Aorta (tissue), 5 donors: ENCODE measurements at regions of chr17 and their contacts with region 1.

Region 1: GRCh38 chr17:59619293-59620063 is at the start of gene CLTC:
- DNase-seq: peak; percentile 96 to 97
- ATAC-seq: peak; percentile 98
- H3K4me3 ChIP-seq: peak within 1 kb of the TSS; percentile 96 to 100
- H3K27ac ChIP-seq: peak within 1 kb of the TSS; percentile 96 to 97
- H3K4me1 ChIP-seq: no peaks in the 10 kb centered on the region
- H3K27me3 ChIP-seq: no peaks in the 10 kb centered on the region
- total RNA-seq, gene CLTC: 243 to 289 TPM

Region 2: DNA sequence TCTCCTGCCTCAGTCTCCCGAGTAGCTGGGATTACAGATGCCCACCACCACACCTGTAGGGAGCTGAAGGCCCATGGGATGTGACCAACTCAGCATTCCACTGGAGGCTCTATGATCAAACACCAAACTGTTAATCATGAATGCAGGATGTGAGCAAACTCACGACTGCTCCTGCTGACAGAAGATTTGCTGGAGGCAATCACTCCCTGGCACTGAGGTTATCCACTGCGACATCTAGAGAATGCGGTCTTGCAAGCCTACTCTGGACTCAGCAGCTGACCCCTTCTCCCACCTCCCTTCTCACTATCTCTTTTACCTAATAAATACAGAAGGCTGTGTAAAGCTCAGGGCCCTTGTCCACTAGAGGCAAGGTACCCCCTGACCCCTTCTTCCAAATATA is 932.5 kb before region 1 on chr17:
- intact Hi-C with region 1: no loop called
- DNase-seq: no peak
- ATAC-seq: no peak
- H3K4me3 ChIP-seq: no peak overlapping the region
- H3K27ac ChIP-seq: no peak overlapping the region
- H3K4me1 ChIP-seq: no peaks in the 10 kb centered on the region
- H3K27me3 ChIP-seq: no peaks in the 10 kb centered on the region

Region 3: GRCh38 chr17:59565171-59565969 is 54.1 kb before region 1 on chr17 and contains the start of gene DHX40:
- intact Hi-C with region 1: loop called in 1 of 2 experiments (anchors 5 kb)
- DNase-seq: peak; percentile 97 to 98
- ATAC-seq: peak; percentile 98
- H3K4me3 ChIP-seq: peak within 1 kb of the TSS; percentile 68 to 92
- H3K27ac ChIP-seq: peak within 1 kb of the TSS in 1 of 2 donors; percentile 85
- H3K4me1 ChIP-seq: no peaks in the 10 kb centered on the region
- H3K27me3 ChIP-seq: no peaks in the 10 kb centered on the region
- total RNA-seq, gene DHX40: 29.3 to 34.0 TPM

Region 4: DNA sequence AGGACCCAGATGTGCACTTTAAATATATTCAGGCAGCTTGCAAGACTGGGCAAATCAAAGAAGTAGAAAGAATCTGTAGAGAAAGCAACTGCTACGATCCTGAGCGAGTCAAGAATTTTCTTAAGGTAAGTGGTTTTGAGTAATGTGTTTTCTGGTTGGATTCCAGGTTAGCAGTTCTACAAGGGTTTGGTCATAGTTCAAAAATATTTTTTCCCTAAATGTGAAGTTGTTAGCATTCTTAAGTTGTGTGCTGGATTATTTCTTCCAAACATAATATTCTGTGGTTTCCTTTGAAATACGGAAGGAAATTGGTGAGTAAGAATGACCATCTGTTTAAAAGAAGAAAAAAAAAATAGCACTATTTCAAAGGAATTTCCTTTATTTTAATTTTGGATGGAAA is 49.3 kb after region 1 on chr17:
- intact Hi-C with region 1: loop called in 1 of 2 experiments (anchors 5 kb)
- DNase-seq: no peak
- ATAC-seq: no peak
- H3K4me3 ChIP-seq: no peak overlapping the region
- H3K27ac ChIP-seq: no peak overlapping the region
- H3K4me1 ChIP-seq: no peaks in the 10 kb centered on the region
- H3K27me3 ChIP-seq: no peaks in the 10 kb centered on the region